ENCODE measurements at regions of chr6 and their contacts with region 1.

Region 1: GRCh38 chr6:104525677-104526312 is 333.9 kb downstream of the HACE1 start:
- DNase-seq: peak; percentile 62 to 78 (median 71)
- ATAC-seq: peak; percentile 89 to 93
- H3K4me3 ChIP-seq: peak overlapping the region; percentile 50
- H3K27ac ChIP-seq: no peak overlapping the region
- H3K4me1 ChIP-seq: no peaks in the 10 kb centered on the region
- H3K27me3 ChIP-seq: no peaks in the 10 kb centered on the region

Region 2: DNA sequence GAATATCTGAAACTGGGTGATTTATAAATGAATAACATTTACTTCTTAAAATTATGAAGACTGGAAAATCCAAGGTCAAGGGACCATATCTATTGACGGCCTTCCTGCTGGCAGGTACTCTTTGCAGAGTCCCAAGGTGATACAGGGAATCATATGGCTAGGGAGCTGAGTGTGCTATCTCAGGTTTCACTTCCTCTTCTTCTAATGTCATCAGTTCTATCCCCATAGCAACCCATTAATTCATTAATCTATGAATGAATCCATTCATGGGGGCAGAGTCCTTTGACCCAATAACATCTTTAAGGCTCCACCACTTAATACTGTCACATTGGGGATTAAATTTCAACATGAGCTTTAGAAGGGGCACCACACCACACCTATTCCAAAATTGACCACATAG is 438.0 kb before region 1 on chr6:
- intact Hi-C with region 1: no loop called
- DNase-seq: no peak
- ATAC-seq: no peak
- H3K4me3 ChIP-seq: no peak overlapping the region
- H3K27ac ChIP-seq: no peak overlapping the region
- H3K4me1 ChIP-seq: no peaks in the 10 kb centered on the region
- H3K27me3 ChIP-seq: no peaks in the 10 kb centered on the region

Region 3: DNA sequence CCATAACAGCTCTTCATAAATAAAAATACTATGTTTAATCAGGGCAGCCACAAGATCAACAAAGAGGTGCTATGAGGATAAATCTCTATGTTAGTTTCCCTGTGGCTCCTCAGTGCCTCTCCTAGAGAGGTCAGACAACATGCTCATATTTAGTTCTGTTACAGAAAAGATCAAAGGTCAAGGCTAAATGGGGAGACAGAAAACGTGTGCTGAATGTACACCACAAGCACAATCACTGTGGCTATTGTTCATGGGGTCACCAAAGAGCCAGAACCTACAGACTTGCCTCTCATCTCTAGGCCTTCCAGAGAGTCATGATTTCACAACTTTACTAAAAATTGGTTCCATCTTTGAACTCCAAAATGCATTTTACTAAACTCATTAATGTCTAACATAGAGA is 75.9 kb before region 1 on chr6:
- intact Hi-C with region 1: no loop called
- DNase-seq: no peak
- ATAC-seq: no peak
- H3K4me3 ChIP-seq: no peak overlapping the region
- H3K27ac ChIP-seq: no peak overlapping the region
- H3K4me1 ChIP-seq: no peaks in the 10 kb centered on the region
- H3K27me3 ChIP-seq: no peaks in the 10 kb centered on the region

Region 4: DNA sequence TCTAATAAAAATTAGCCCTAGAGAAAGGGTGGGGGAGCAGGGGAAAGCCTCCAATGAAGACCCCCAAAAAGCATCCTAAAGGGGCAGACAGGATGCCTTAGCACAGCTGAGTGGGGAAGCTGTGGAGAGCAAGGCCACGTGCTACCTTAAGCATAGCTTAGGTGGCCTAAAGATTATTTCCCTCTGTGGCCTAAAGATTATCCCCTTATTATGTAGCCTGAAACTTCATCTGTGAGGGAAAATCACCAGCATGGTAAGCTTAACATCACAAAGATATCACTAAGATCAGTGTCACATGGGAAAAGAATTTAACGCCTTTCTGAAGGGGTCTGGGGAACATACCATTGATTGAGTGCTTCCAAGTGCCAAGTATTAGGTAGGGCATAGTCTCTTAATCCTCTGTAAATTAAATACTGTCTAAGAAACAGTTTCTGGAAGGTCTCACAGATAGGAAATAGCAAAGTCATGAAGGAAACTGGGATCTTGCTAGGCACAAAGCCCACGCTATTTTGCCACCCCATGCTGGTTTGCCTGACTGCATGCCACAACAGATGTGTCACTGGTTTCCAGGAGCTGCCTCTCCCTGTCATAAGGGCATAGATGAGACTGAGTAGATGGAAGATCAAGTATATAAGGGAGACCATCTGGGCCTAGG is 163.9 kb after region 1 on chr6:
- intact Hi-C with region 1: no loop called
- DNase-seq: no peak
- ATAC-seq: no peak
- H3K4me3 ChIP-seq: no peak overlapping the region
- H3K27ac ChIP-seq: no peak overlapping the region
- H3K4me1 ChIP-seq: no peaks in the 10 kb centered on the region
- H3K27me3 ChIP-seq: no peaks in the 10 kb centered on the region

Region 5: GRCh38 chr6:104699593-104700329 is 174.0 kb after region 1 on chr6:
- intact Hi-C with region 1: loop called in 1 of 4 experiments (anchors 5 kb)
- DNase-seq: no peak
- ATAC-seq: no peak
- H3K4me3 ChIP-seq: no peak overlapping the region
- H3K27ac ChIP-seq: no peak overlapping the region
- H3K4me1 ChIP-seq: no peaks in the 10 kb centered on the region
- H3K27me3 ChIP-seq: no peaks in the 10 kb centered on the region

Region 6: GRCh38 chr6:104771258-104771832 is 245.6 kb after region 1 on chr6:
- intact Hi-C with region 1: loop called in 1 of 4 experiments (anchors 10 kb)
- DNase-seq: no peak
- ATAC-seq: no peak
- H3K4me3 ChIP-seq: no peak overlapping the region
- H3K27ac ChIP-seq: no peak overlapping the region
- H3K4me1 ChIP-seq: no peaks in the 10 kb centered on the region
- H3K27me3 ChIP-seq: no peaks in the 10 kb centered on the region